ENCODE measurements at regions of chr9 and their contacts with region 1.

Region 1: GRCh38 chr9:114263853-114264510 is 58.9 kb upstream of the ORM1 start:
- DNase-seq: peak in 1 of 2 experiments; percentile 79
- H3K4me3 ChIP-seq: no peak overlapping the region
- H3K27ac ChIP-seq: no peak overlapping the region
- H3K4me1 ChIP-seq: peaks cover 0 to 3% (median 0%) of the 10 kb centered on the region in 4 experiments; a peak in 2 of 7 replicates
- H3K27me3 ChIP-seq: no peaks in the 10 kb centered on the region
- CTCF ChIP-seq: peak; percentile 26 to 45 (median 33); a peak in 3 of 4 replicates
- EP300 ChIP-seq: no peak
- POLR2A ChIP-seq: no peak
- RAD21 ChIP-seq: peak; percentile 54 to 57

Region 2: DNA sequence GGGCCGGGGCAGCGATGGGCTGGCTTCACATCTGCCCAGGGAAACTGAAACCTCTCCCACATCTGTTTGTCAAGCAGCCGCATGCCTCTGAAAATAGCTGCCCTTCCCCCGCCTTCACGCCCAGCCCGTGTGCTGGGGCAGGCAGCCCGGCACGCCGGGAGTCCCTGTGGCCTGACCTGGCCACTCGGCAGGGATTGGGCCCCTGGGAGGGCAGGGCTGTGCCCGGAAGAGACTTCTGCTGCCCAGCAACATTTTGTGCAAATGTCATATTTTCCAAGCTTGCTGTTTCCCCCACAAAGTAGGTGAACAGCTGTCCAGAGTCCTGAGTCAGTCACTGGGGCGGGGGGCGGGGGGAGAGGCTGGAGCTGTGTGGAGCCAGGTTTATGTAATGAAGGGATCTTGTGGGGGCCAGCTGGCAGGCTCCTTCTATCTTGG is 100.4 kb before region 1 on chr9:
- CTCF ChIA-PET with region 1: interaction called, 10 read pairs
- POLR2A ChIA-PET with region 1: no interaction called
- DNase-seq: peak in 1 of 2 experiments; percentile 62
- H3K4me3 ChIP-seq: no peak overlapping the region
- H3K27ac ChIP-seq: no peak overlapping the region
- H3K4me1 ChIP-seq: peaks cover 5 to 8% (median 6%) of the 10 kb centered on the region in 4 experiments; a peak in 4 of 7 replicates
- H3K27me3 ChIP-seq: no peaks in the 10 kb centered on the region
- CTCF ChIP-seq: no peak
- EP300 ChIP-seq: no peak
- POLR2A ChIP-seq: no peak
- RAD21 ChIP-seq: no peak

Region 3: DNA sequence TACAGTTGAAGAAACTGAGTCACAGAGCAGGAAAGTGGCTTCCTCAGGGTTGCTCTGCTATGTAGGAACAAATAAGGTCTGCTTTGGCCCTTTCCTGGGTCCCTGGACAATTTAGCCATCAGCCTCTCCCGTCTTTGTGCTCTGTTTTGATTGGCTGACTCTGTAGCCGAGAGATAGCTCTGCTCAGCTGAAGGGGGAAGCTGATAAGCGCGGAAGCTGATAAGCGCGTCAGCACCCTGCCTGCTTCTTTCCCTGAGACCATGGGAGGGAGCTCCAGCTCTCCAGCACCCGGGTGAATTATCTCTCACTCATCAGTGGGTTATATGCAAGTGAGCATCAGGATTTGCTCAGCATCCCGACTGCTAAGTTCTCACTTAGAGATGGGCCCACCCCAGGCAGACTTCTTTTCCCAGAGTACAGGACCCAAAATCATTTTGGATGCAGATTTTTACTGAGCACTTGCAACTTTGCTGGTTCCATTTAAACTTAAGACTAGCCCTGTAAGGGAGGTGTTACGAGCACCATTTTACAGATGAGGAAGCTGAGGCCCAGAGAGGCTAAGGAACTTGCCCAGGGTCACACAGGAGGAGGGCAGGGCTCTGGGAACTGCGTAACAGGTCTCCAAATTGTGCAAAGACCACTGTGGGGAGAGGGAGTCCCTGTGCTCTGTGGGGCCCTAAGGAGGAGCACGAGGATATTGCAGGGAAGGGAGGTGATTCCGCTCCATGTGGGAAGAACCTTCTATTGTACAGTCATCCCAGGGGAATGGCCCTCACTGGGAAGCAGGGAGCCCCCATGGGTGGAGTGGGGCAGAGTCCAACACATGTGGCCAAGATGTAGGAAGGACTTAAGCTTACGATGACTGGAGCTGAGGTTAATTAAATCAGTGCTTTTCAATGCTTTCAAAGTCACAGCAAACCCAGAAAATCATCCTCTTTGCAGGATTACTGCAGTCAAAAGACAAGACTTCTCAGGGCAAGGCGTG is 24.8 kb before region 1 on chr9:
- CTCF ChIA-PET with region 1: interaction called, 11 read pairs
- POLR2A ChIA-PET with region 1: no interaction called
- DNase-seq: no peak
- H3K4me3 ChIP-seq: no peak overlapping the region
- H3K27ac ChIP-seq: no peak overlapping the region
- H3K4me1 ChIP-seq: peaks cover 0 to 4% (median 0%) of the 10 kb centered on the region in 4 experiments; a peak in 2 of 7 replicates
- H3K27me3 ChIP-seq: no peaks in the 10 kb centered on the region; a peak in 2 of 7 replicates
- CTCF ChIP-seq: peak in 2 of 3 experiments; percentile 40 to 52; a peak in 3 of 4 replicates
- EP300 ChIP-seq: no peak
- POLR2A ChIP-seq: no peak
- RAD21 ChIP-seq: peak; percentile 52 to 57

Region 4: DNA sequence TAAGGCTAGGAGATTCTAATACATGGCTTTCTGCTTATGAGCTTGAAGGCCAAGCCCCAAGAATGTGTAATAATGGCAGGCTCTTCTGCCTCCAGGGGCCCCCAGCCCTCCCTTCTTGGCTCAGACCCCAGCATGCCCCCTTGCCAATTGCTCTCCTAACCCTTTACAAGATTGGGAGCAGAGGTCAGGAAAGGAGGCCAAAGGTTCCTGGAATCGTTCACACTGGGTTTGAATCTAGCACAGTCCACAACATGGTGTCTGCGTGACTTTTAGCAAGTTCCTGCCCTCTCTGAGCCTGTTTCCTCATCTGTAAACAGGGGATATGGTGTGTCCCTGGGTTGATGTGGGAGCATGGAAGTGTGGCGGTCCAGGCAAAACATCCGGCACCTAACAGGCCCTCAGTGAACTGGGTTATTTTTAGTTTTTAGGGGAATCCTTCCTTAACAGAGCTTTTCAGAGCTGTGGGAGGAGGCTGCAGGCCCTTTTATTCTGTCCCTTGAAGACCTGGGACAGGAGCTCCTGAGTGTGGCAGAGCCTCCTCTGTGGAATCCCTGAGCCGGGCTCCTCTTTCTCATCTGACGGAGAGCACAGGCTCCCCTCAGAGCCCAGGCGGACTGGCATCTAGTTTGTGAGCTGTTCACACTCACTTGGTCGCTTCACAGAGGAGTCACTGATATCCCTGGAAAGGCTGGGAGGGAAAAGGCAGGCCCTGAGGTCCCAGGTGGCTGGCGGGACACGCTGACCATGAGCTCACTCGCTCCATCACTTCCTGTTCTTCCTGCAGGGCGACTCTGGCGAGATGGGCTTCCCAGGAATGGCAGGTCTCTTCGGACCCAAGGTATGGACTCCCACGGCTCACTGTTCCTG is 35.5 kb after region 1 on chr9:
- CTCF ChIA-PET with region 1: no interaction called
- POLR2A ChIA-PET with region 1: no interaction called
- DNase-seq: peak in 1 of 2 experiments; percentile 39
- H3K4me3 ChIP-seq: no peak overlapping the region
- H3K27ac ChIP-seq: no peak overlapping the region
- H3K4me1 ChIP-seq: no peaks in the 10 kb centered on the region
- H3K27me3 ChIP-seq: no peaks in the 10 kb centered on the region
- CTCF ChIP-seq: no peak
- EP300 ChIP-seq: no peak
- POLR2A ChIP-seq: no peak
- RAD21 ChIP-seq: no peak

Measured in H1 (cell line).